ENCODE measurements at regions of chr21 and their contacts with region 1.

Region 1: DNA sequence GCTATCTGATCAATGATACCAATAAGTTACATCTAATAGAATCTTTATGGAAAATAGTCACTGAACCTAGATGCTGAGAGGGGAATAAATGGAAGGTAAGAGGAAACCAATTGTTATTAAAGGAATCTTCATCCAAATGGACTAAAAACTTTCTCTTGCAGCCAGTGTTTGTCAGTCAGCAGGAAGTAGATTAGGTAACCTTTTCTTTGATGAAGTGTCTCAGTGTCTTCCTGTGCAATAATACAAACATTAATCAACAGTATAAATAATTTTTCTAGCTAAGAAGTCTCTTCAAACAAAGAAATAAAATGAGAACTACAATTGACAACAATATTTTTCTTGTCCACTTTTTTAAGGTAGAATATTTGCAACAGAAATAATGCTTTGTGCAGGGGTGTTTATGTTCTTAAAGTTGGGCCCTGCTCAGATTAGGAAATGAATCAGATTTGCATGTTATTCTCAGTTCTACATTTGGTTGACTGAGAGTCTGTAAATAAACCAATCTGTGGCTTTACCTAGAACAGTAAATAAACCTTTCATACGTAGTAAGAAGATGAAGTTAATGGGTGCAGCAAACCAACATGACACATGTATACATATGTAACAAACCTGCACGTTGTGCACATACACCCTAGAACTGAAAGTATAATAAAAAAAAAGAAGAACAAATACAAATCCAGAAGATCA is 391.4 kb downstream of the MRPL39 start:
- DNase-seq: no peak
- ATAC-seq: peak; percentile 90
- H3K4me3 Mint-ChIP-seq: peak overlapping the region; percentile 35
- H3K27ac Mint-ChIP-seq: peak overlapping the region; percentile 42
- H3K4me1 Mint-ChIP-seq: peaks cover 31% of the 10 kb centered on the region
- H3K27me3 Mint-ChIP-seq: no peaks in the 10 kb centered on the region
- CTCF ChIP-seq: no peak

Region 2: DNA sequence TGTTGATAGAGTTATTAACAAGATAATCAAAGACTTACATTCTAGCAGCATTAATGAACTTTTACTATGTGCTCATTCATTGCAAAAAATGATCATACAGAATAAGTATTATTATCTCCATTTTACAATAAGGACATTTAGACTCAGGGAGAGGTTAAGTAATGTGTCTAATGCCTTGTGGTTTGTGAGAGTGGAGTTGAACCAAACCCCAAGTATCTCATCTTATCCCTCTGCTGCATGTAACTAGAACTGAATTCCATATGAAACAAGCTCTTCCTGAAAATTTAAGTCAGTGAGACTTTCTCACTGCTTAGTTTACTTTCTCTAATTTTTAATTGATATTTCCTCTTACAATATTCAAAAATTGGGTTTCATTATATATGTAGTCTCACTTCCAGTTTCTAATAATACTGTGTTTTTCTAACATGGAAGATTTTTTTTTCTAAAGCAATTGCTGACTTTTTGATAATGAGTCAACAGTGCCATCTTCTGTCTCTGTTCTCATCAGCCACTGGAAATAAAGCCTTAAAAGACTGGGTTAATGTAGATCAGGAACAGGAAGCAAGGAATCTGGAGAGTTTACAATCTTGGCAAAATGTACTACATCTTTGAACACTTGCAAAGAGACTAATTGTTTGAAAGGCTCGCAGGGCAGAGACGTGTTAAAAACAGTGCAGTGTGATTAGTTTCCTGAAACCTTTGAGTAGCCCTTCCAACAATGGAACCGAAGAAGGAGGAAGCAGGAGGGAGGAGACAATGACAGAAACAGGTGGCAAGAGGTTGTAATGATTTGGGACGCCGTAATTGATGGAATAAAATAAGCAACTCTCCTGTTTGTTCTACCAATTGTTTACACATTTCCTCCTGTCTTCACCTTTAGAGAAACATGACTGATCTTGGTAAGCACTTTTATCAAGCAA is 176.1 kb before region 1 on chr21:
- CTCF ChIA-PET with region 1: no interaction called
- POLR2A ChIA-PET with region 1: no interaction called
- intact Hi-C with region 1: no loop called
- DNase-seq: no peak
- ATAC-seq: peak; percentile 64
- H3K4me3 Mint-ChIP-seq: peak overlapping the region; percentile 74
- H3K27ac Mint-ChIP-seq: peak overlapping the region; percentile 80
- H3K4me1 Mint-ChIP-seq: peaks cover 35% of the 10 kb centered on the region
- H3K27me3 Mint-ChIP-seq: no peaks in the 10 kb centered on the region
- CTCF ChIP-seq: no peak

Region 3: GRCh38 chr21:25234857-25235801 is 19.3 kb after region 1 on chr21:
- CTCF ChIA-PET with region 1: no interaction called
- POLR2A ChIA-PET with region 1: no interaction called
- intact Hi-C with region 1: loop called (anchors 2 kb)
- DNase-seq: no peak
- ATAC-seq: peak; percentile 80
- H3K4me3 Mint-ChIP-seq: peak overlapping the region; percentile 35
- H3K27ac Mint-ChIP-seq: peak overlapping the region; percentile 69
- H3K4me1 Mint-ChIP-seq: peaks cover 42% of the 10 kb centered on the region
- H3K27me3 Mint-ChIP-seq: no peaks in the 10 kb centered on the region
- CTCF ChIP-seq: no peak

Region 4: GRCh38 chr21:25254491-25255174 is 38.8 kb after region 1 on chr21:
- CTCF ChIA-PET with region 1: no interaction called
- POLR2A ChIA-PET with region 1: no interaction called
- intact Hi-C with region 1: loop called (anchors 5 kb)
- DNase-seq: no peak
- ATAC-seq: no peak
- H3K4me3 Mint-ChIP-seq: no peak overlapping the region
- H3K27ac Mint-ChIP-seq: no peak overlapping the region
- H3K4me1 Mint-ChIP-seq: peaks cover 3% of the 10 kb centered on the region
- H3K27me3 Mint-ChIP-seq: no peaks in the 10 kb centered on the region
- CTCF ChIP-seq: no peak

Region 5: DNA sequence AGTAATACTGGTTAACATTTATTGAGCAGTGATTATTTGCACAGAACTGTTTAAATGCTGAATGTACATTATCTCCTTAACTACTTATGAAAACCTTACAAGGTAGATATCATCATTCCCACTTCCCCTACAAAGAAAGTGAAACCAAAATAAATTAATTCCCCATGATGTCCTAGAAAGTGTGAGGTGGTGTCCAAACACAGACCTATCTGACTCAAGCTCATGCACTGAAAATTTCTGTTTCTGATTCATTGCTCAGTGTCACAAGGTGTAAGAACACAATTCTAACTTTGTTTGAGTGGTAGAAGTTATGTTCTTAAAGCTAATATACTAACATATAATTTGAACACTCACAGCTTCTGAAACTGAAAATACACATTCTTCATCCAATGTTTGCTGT is 212.7 kb after region 1 on chr21:
- CTCF ChIA-PET with region 1: no interaction called
- POLR2A ChIA-PET with region 1: no interaction called
- intact Hi-C with region 1: no loop called
- DNase-seq: no peak
- ATAC-seq: peak; percentile 15
- H3K4me3 Mint-ChIP-seq: peak overlapping the region; percentile 35
- H3K27ac Mint-ChIP-seq: peak overlapping the region; percentile 65
- H3K4me1 Mint-ChIP-seq: peaks cover 53% of the 10 kb centered on the region
- H3K27me3 Mint-ChIP-seq: no peaks in the 10 kb centered on the region
- CTCF ChIP-seq: no peak

Measured in activated B cell treated with CpG ODN at 0.5 μM for 24 hours (primary cell).